ENCODE measurements at regions of chr12 and their contacts with region 1.

Region 1: DNA sequence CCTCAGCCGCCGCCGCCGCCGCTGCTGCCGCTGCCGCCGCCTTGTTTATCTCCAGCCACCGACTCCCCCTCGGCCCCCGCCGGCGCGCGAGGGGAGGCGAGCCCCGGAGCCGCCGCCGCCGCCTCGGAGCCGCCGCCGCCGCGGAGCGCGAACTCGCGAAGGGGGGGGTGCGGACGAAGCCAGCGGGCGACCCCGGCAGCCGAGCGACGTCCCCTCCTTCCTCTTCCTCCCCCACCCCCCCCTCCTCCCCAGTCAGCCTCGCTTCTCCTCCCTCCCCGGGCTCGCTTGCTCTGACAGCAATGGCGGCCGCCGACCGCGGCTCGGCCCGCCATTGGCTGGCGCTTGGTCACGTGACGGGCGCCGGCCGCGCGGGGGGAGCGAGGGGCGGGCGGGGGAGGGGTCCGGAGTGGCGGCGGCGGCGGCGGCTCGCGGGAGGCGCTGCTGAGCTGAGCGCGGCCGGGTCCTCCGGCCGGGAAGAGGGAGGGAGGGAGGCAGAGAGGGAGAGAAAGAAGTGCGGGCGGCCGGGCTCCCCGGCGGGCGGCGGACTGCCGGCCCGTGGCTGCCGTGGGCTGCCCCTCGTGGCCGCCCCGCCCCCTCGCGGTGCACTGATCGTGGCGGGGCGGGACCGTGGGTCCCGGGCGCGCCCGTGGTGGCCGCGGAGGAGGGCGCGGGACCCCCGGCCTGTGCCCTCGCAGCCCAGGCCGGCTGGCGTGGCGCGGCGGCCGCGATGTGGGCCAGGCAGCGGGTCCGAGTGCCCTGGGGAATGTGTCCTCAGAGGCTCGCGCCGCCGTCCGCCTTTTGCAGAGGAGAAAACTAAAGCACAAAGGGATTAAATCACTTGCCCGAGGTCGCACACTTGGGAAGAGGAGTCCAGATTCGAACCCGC is at the start of gene MED13L:
- DNase-seq: peak; percentile 88 to 96 (median 95)
- ATAC-seq: peak; percentile 91 to 96
- H3K4me3 ChIP-seq: peak within 1 kb of the TSS; percentile 82
- H3K27ac ChIP-seq: peak within 1 kb of the TSS; percentile 99
- H3K4me1 ChIP-seq: no peaks in the 10 kb centered on the region
- H3K27me3 ChIP-seq: no peaks in the 10 kb centered on the region
- total RNA-seq, gene MED13L: 68.8 to 73.5 (median 69.8) TPM

Region 2: DNA sequence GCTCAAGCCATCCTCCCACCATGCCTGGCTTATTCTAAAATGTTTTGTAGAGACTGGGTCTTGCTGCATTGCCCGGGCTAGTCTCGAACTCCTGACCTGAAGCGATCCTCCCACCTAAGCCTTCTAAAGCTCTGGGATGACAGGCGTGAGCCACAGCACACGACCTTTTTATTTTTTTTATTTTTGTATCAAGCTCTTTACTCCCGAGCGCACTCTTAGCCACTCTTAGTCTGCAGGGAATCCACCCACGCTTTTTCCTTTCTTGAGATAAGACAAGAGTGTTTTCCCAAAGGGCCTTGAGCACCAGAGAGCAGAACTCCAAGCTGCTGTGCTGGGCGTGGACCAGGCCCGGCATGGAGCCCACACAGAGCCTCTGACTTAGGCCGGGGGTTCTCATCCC is 305.0 kb after region 1 on chr12:
- intact Hi-C with region 1: loop called in 1 of 4 experiments (anchors 10 kb)
- DNase-seq: peak; percentile 65 to 83 (median 81)
- ATAC-seq: peak; percentile 94 to 97
- H3K4me3 ChIP-seq: no peak overlapping the region
- H3K27ac ChIP-seq: no peak overlapping the region
- H3K4me1 ChIP-seq: no peaks in the 10 kb centered on the region
- H3K27me3 ChIP-seq: no peaks in the 10 kb centered on the region

Measured in right cardiac atrium (tissue), 5 donors.